Sigmoid colon (tissue), 7 donors: ENCODE measurements at regions of chr6 and their contacts with region 1.

Region 1: DNA sequence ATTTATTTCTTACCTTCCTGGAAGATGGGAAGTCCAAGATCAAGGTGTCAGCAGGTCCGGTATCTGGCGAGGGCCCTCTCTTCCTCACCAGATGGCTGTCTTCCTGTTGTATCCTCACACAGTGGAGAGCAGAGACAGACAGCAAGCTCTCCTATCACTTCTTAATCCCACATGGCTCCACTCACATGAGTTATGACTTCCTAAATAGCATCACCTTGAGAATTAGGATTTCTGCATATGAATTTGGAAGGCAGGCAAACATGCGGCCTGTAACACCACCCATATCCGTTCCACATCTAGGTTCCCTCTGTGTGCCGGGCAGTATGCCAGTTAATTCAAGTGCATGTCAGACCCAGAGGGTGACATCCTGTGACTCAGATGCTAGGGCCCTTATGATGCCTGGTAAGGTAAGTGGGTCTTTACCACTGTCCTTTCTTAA is 2.1 kb downstream of the RAET1E start:
- DNase-seq: no peak
- H3K4me3 ChIP-seq: no peak overlapping the region
- H3K27ac ChIP-seq: peak overlapping the region; percentile 68 to 75 (median 71)
- H3K4me1 ChIP-seq: peaks cover 0 to 32% (median 32%) of the 10 kb centered on the region in 4 donors
- H3K27me3 ChIP-seq: no peaks in the 10 kb centered on the region
- CTCF ChIP-seq: no peak
- EP300 ChIP-seq: no peak
- POLR2A ChIP-seq: no peak

Region 2: DNA sequence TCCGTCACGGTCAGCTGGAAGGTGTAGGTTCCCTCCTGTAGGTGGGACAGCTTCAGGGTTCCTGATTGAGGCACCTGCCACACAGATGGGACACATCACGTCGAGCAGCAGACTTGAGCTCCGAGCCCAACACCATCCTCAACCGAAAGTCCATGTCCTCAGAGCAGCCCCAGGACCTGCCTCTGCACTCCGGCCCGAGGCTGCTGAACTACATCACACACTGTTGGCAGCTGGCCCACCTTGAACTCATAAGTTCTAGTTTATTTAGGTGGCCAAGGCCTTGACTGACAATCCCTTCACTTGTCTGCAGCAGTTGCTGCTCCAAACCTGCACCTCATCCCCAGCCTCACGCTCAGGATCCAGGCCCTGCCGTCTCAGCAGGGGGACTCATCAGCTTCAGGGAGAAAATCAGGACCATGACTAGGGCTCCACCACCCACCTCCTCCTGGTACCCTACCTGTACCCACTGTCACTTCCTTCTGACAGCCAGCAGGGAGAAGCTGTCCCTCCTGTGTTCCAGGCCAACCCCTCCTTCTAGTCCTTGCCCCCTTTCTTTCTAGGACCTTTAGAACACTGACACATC is 52.7 kb before region 1 on chr6:
- intact Hi-C with region 1: loop called (anchors 2 kb)
- DNase-seq: no peak
- H3K4me3 ChIP-seq: no peak overlapping the region
- H3K27ac ChIP-seq: no peak overlapping the region
- H3K4me1 ChIP-seq: peaks cover 0 to 25% (median 21%) of the 10 kb centered on the region in 4 donors
- H3K27me3 ChIP-seq: no peaks in the 10 kb centered on the region
- CTCF ChIP-seq: no peak
- EP300 ChIP-seq: no peak
- POLR2A ChIP-seq: no peak

Region 3: GRCh38 chr6:149863697-149864577 is 31.9 kb before region 1 on chr6 and contains the start of gene LRP11:
- intact Hi-C with region 1: loop called (anchors 1 kb)
- DNase-seq: peak; percentile 93
- H3K4me3 ChIP-seq: peak within 1 kb of the TSS; percentile 30 to 89 (median 72)
- H3K27ac ChIP-seq: peak within 1 kb of the TSS; percentile 90 to 97 (median 94)
- H3K4me1 ChIP-seq: peaks cover 0 to 29% (median 19%) of the 10 kb centered on the region in 4 donors
- H3K27me3 ChIP-seq: no peaks in the 10 kb centered on the region
- CTCF ChIP-seq: no peak
- EP300 ChIP-seq: no peak
- POLR2A ChIP-seq: no peak
- total RNA-seq, gene LRP11: 17.2 to 71.7 (median 21.5) TPM

Region 4: DNA sequence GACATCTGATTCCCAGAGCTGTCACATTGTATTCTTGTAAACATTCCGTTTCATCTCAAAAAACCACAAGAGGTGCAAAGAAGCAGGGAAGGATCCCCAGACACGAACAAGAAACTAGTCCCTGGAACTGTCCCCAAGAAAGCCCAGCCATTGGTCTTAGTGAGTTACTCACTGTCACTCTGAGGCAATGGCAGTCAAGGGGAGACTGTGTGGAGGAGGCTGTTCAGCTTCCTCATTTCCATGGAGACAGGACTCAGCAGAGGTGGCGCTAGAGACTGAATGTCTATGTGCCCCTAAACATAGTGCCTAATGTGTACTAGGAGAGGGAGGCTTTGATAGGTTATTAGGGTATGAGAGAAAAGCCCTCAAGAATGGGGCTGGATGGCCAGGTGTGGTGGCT is 79.0 kb after region 1 on chr6:
- intact Hi-C with region 1: no loop called
- DNase-seq: no peak
- H3K4me3 ChIP-seq: no peak overlapping the region
- H3K27ac ChIP-seq: no peak overlapping the region
- H3K4me1 ChIP-seq: no peaks in the 10 kb centered on the region
- H3K27me3 ChIP-seq: peaks cover 0 to 67% (median 2%) of the 10 kb centered on the region in 3 donors
- CTCF ChIP-seq: no peak
- EP300 ChIP-seq: no peak
- POLR2A ChIP-seq: no peak